ENCODE measurements at regions of chr1 and their contacts with region 1.

Region 1: DNA sequence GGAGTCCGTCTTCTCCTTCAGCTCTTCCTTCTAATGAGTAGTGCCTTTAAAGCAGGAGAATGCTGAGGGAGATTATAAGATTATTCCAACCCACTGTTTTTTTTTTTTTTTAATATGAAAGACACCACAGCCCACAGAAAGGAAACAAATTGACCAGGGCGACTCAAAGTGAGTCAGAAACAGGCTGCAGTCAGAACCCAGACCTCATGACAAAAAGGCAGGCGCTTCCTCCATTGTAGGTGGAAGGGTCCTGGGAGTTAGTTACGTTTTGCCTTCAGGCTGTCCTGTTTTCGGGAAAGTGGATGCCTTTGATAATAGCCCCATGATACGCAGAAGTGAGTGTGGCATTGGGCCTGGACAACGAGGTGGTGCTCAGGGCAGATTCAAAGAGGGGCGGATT is 21.0 kb downstream of the PLXNA2 start:
- DNase-seq: peak; percentile 45 to 80 (median 74)
- H3K4me3 ChIP-seq: no peak overlapping the region
- H3K27ac ChIP-seq: no peak overlapping the region
- H3K4me1 ChIP-seq: peaks cover 3 to 51% (median 31%) of the 10 kb centered on the region in 4 experiments
- H3K27me3 ChIP-seq: no peaks in the 10 kb centered on the region

Region 2: DNA sequence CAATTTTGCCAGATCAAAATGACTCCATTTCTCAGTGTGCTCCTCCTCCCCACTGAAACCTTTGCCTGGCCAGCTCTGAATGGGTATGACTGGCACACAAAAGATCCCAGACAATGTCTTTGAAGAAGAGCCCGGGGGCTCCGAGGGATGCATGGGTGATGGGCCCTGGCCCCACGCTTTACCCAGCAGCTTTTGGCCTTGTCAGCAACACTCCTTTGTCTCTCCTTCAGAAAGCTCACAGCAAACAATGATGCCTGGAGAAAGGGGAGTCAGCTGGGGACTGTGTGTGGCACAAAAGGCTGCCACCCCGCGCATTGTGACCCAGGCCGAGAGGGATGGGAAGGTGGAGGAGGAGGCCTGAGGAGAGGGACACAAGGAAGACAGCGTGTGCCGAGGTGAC is 24.9 kb before region 1 on chr1:
- CTCF ChIA-PET with region 1: no interaction called
- POLR2A ChIA-PET with region 1: no interaction called
- DNase-seq: no peak
- H3K4me3 ChIP-seq: no peak overlapping the region
- H3K27ac ChIP-seq: no peak overlapping the region
- H3K4me1 ChIP-seq: peaks cover 0 to 6% (median 2%) of the 10 kb centered on the region in 4 experiments
- H3K27me3 ChIP-seq: no peaks in the 10 kb centered on the region

Region 3: GRCh38 chr1:208233546-208233945 is 10.4 kb after region 1 on chr1:
- CTCF ChIA-PET with region 1: interaction called, 17 read pairs
- POLR2A ChIA-PET with region 1: no interaction called
- DNase-seq: no peak
- H3K4me3 ChIP-seq: no peak overlapping the region
- H3K27ac ChIP-seq: no peak overlapping the region
- H3K4me1 ChIP-seq: peaks cover 7 to 29% (median 17%) of the 10 kb centered on the region in 4 experiments
- H3K27me3 ChIP-seq: no peaks in the 10 kb centered on the region

Region 4: DNA sequence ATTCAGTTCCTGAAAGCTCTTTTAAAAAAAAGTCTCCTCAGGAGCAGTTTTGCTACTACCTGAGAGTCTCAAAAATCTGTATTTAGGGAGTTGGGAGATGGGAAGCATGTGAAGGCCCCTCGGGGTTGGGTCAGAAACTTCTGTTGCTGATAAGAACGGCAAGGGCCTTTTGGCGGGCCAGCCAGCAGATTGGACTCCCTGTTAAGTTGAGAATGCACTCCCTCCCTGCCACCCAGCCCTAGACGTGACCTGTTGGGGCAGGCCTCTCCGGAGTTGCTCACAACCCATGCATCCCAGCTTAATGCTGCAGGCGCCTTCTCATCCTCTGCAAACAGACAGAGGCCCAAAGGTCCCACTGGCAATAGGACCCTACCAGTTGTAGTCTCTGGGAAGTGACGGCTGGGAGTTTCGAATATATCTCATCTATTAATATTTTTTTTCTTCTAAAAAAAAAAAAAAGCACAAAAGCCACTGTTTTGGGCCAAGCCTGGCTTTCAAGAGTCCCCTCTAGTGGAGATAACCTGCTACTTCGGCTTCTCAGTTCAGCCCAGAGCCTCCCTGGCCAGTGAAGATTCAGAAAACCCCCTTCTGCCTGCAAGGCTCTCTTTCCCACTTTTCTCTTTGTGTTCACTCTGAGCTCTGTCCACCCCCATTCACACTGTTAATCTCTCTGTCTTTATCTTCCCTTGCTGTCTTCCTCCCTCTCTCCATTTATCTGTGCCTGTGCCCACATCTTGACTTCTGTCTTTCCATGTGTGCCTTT is 15.8 kb after region 1 on chr1:
- CTCF ChIA-PET with region 1: interaction called, 17 read pairs
- POLR2A ChIA-PET with region 1: no interaction called
- DNase-seq: peak; percentile 51 to 74 (median 65)
- H3K4me3 ChIP-seq: no peak overlapping the region
- H3K27ac ChIP-seq: no peak overlapping the region
- H3K4me1 ChIP-seq: peaks cover 7 to 43% (median 30%) of the 10 kb centered on the region in 4 experiments
- H3K27me3 ChIP-seq: peaks cover 2 to 34% (median 18%) of the 10 kb centered on the region in 5 experiments

Region 5: GRCh38 chr1:208520438-208521099 is 297.4 kb after region 1 on chr1:
- CTCF ChIA-PET with region 1: no interaction called
- POLR2A ChIA-PET with region 1: no interaction called
- DNase-seq: no peak
- H3K4me3 ChIP-seq: no peak overlapping the region
- H3K27ac ChIP-seq: no peak overlapping the region
- H3K4me1 ChIP-seq: no peaks in the 10 kb centered on the region
- H3K27me3 ChIP-seq: no peaks in the 10 kb centered on the region

Measured in common myeloid progenitor, CD34-positive (primary cell).